Activated naive CD4-positive, alpha-beta T cell treated with anti-CD3 and anti-CD28 coated beads, Interleukin-2, amount 10 ng/mL, durations not matched to agents 7 days and 5 days (primary cell): ENCODE measurements at regions of chr7 and their contacts with region 1.

Region 1: DNA sequence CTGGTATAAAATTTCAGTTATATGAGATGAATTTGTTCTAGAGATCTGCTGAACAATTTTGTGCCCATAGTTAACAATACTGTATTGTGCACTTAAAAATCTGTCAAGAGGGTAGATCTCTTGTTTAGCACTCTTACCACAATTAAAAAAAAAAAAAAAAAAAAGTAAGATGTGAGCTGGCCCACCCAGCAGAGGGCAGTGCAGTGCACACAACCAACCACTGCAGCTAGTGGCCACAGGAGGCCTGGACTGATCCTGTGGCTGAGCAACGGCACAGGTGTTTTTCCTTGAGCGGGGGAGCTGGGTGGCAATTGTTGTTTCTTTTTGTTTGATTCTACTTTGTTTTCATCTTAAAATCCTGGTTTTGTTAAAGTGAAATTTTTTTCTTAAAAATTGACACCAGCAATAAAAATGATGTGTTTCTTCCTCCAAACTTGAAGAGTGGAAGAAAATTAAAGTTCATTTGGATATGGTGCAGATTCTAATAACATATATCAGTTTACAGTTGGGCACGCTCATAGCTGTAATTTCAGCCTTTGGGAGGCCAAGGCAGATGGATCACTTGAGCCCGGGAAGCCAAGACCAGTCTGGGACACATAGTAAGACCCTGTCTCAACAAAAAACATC is 171.1 kb upstream of the TBX20 start:
- DNase-seq: peak; percentile 69
- H3K4me3 Mint-ChIP-seq: no peak overlapping the region
- H3K27ac Mint-ChIP-seq: no peak overlapping the region
- H3K4me1 Mint-ChIP-seq: no peaks in the 10 kb centered on the region
- H3K27me3 Mint-ChIP-seq: peaks cover 25% of the 10 kb centered on the region

Region 2: DNA sequence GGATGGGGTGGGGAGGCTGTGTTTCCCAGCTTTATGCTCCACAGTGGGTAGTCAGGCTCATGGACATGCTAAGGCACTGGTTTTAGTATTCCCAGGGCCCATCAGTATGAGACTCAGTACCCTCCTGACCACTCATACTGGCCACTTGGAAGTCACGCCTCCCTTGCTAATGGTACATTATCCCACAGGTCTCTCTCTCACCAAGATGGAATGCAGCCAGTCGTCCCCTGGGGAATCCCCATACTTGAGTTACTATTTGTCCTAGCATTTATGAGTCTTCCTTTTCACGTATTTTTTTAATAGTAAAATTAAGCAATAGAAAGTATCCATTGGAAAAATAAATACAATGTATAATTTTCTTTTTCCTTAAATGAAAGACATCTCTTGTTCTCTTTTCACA is 90.5 kb before region 1 on chr7:
- CTCF ChIA-PET with region 1: no interaction called
- DNase-seq: no peak
- H3K4me3 Mint-ChIP-seq: no peak overlapping the region
- H3K27ac Mint-ChIP-seq: no peak overlapping the region
- H3K4me1 Mint-ChIP-seq: no peaks in the 10 kb centered on the region
- H3K27me3 Mint-ChIP-seq: peaks cover 4% of the 10 kb centered on the region

Region 3: DNA sequence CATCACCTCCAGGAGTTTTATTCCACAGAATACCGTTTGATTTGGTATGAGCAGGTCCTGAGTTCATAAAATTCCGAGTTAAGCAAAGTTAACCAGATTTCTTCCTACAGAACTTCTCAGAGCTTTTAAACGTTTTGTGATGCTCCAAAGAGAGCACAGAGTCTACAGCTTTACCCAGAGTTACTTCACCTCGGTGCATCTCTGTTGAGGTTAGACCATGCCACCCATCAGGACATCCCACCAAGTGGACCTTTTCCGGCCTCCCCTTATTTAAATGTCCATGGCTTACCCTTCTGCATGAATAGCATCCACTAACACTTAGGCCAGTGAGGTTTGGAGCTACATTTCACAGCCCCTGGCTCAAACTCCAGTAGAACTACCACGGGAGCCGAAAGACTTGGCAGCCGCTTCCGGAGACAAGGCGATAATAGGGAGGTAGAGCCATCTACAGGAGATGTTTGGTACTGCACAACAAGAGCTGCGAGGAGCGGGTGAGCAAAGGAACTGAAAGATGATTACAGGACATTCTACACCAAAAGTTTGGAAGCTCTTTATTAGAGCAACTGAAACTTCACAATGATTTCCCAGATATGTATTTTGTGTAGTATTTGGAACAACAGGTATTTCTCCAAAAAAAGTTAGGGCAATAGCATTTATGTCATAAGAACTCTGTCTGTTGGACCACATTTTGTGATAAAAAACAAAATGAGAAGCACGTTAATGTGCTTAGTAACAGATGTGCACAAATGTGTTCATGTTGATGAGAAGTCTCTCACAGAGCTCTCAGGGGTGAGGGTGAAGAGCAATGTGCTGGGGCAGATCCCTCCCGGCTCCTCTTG is 95.2 kb after region 1 on chr7:
- CTCF ChIA-PET with region 1: interaction called, 12 read pairs
- DNase-seq: peak; percentile 68
- H3K4me3 Mint-ChIP-seq: no peak overlapping the region
- H3K27ac Mint-ChIP-seq: no peak overlapping the region
- H3K4me1 Mint-ChIP-seq: no peaks in the 10 kb centered on the region
- H3K27me3 Mint-ChIP-seq: peaks cover 16% of the 10 kb centered on the region

Region 4: GRCh38 chr7:35624299-35625186 is 199.6 kb after region 1 on chr7:
- CTCF ChIA-PET with region 1: interaction called, 17 read pairs
- DNase-seq: peak; percentile 41
- H3K4me3 Mint-ChIP-seq: no peak overlapping the region
- H3K27ac Mint-ChIP-seq: no peak overlapping the region
- H3K4me1 Mint-ChIP-seq: peaks cover 2% of the 10 kb centered on the region
- H3K27me3 Mint-ChIP-seq: peaks cover 4% of the 10 kb centered on the region